Dorsolateral prefrontal cortex (tissue), 120 donors: ENCODE measurements at regions of chr1 and their contacts with region 1.

Region 1: DNA sequence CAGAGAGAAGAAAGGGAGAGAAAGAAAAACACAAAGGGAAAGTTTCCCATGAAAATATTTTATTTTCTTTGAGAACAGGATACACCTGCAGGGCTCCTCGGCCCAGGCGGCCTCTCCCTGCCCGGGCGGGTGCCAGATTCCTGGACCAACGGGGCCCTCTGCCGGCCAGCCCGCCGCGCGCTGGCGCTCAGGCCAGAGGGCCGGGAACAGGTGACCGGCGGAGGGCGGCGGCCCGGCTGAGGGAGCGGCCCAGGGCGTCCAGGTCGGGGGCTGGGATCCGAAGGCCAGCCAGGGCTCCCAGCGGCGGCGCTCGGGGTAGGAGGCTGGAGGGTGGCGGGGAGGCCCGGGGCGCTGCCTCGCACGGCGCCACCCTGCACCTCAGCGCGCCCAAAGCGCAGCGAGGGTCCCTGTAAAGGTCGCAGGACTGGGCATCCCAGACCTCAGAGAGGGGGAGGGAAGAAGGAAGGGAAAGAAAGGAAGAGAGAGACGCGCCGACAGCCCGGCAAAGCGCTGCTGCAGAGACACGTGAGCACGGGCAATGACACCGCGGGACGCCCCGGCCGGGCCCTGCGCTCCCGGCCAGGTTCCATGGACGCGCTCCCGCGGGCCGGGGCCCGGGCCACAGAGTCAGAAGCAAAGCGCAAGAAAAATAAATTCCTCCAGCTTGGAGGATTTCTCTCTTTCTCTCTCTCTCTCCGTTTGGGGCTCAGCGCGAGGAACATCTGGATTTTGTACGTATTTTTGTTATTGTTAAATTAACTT is 927 bp downstream of the WNT9A start:
- DNase-seq: peak in 9 of 10 donors; percentile 39 to 81 (median 68)
- H3K4me3 ChIP-seq: peak overlapping the region; percentile 1 to 69 (median 50)
- H3K27ac ChIP-seq: peak overlapping the region in 2 of 59 donors; percentile 19 to 36
- H3K27me3 ChIP-seq: peaks cover 0 to 29% (median 11%) of the 10 kb centered on the region in 45 donors
- CTCF ChIP-seq: peak; percentile 32 to 94 (median 82)

Region 2: GRCh38 chr1:227486559-227486958 is 460.2 kb before region 1 on chr1:
- intact Hi-C with region 1: loop called (anchors 2 to 5 kb)
- DNase-seq: no peak
- H3K4me3 ChIP-seq: no peak overlapping the region
- H3K27ac ChIP-seq: no peak overlapping the region
- H3K27me3 ChIP-seq: peaks cover 0 to 6% (median 0%) of the 10 kb centered on the region in 45 donors
- CTCF ChIP-seq: no peak

Region 3: GRCh38 chr1:227762233-227762911 is 184.4 kb before region 1 on chr1:
- intact Hi-C with region 1: loop called (anchors 1 to 2 kb)
- DNase-seq: peak; percentile 72 to 90 (median 85)
- H3K4me3 ChIP-seq: peak overlapping the region in 10 of 59 donors; percentile 1 to 34 (median 12)
- H3K27ac ChIP-seq: peak overlapping the region in 50 of 59 donors; percentile 14 to 94 (median 66)
- H3K27me3 ChIP-seq: no peaks in the 10 kb centered on the region
- CTCF ChIP-seq: peak; percentile 73 to 94 (median 87)

Region 4: DNA sequence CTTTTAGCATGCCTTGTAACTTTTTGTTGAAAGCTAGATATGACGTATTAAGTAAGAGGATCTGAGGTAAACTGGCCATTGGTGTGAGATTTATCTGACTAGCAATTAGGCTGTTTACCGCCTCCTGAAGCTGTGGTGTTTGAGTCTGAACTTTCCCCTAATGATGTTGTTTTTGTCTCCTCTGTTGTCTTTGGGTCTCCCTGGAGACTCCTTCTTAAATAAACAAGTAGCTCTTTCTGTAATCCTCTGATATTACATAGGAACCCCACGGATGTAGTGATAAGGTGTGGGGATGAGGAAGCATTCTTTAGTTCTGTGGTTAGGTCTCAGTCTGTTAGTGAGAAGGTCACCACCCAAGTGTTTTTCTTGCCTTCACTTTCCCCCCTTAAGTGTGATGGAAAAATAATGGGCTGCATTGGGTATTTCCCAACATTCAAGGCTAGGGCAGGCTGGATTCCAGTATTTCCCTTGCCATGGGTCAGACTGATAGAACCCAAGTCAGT is 98.3 kb before region 1 on chr1:
- intact Hi-C with region 1: loop called in 1 of 2 experiments (anchors 1 kb)
- DNase-seq: no peak
- H3K4me3 ChIP-seq: no peak overlapping the region
- H3K27ac ChIP-seq: no peak overlapping the region
- H3K27me3 ChIP-seq: peaks cover 0 to 11% (median 0%) of the 10 kb centered on the region in 45 donors
- CTCF ChIP-seq: no peak